Dorsolateral prefrontal cortex (tissue), 120 donors: ENCODE measurements at regions of chr3 and their contacts with region 1.

Region 1: GRCh38 chr3:34185301-34185700 is 386.9 kb downstream of the PDCD6IP start:
- DNase-seq: no peak
- H3K4me3 ChIP-seq: no peak overlapping the region
- H3K27ac ChIP-seq: peak overlapping the region in 1 of 59 donors; percentile 77
- H3K27me3 ChIP-seq: no peaks in the 10 kb centered on the region
- CTCF ChIP-seq: no peak

Region 2: DNA sequence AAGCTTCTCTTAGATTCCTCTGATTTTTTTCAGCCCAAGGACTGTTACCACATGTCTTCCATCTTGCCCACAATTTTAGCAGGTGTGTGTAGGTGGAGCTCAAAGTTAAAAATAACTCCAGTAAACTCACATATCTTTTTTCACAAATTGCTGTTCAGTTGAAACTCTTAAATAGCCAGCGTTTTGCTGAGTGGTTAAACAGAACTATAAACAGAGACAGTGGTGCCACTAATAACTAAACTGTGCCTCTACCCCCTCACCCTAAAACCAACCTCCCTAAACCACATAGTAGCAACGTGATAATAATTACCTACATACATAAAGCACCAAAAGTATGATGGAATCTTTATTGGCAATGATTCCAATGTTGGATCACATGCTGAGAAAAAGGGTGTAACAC is 138.2 kb after region 1 on chr3:
- intact Hi-C with region 1: loop called in 1 of 2 experiments (anchors 5 kb)
- DNase-seq: no peak
- H3K4me3 ChIP-seq: no peak overlapping the region
- H3K27ac ChIP-seq: peak overlapping the region in 2 of 59 donors; percentile 8 to 14
- H3K27me3 ChIP-seq: no peaks in the 10 kb centered on the region
- CTCF ChIP-seq: no peak